ENCODE measurements at regions of chr2 and their contacts with region 1.

Region 1: GRCh38 chr2:69717861-69718273 is 24.1 kb upstream of the ANXA4 start:
- DNase-seq: no peak
- H3K4me3 ChIP-seq: no peak overlapping the region
- H3K27ac ChIP-seq: no peak overlapping the region
- H3K4me1 ChIP-seq: peaks cover 0 to 3% (median 1%) of the 10 kb centered on the region in 4 experiments
- H3K27me3 ChIP-seq: no peaks in the 10 kb centered on the region

Region 2: GRCh38 chr2:69695850-69696216 is 22.0 kb before region 1 on chr2:
- CTCF ChIA-PET with region 1: interaction called, 22 read pairs
- POLR2A ChIA-PET with region 1: no interaction called
- DNase-seq: no peak
- H3K4me3 ChIP-seq: no peak overlapping the region
- H3K27ac ChIP-seq: no peak overlapping the region
- H3K4me1 ChIP-seq: peaks cover 9 to 24% (median 20%) of the 10 kb centered on the region in 4 experiments
- H3K27me3 ChIP-seq: no peaks in the 10 kb centered on the region